Activated CD4-positive, alpha-beta T cell treated with anti-CD3 and anti-CD28 coated beads, Interleukin-2, amount 10 ng/mL, durations not matched to agents 24 days and 14 days (primary cell): ENCODE measurements at regions of chr1 and their contacts with region 1.

Region 1: GRCh38 chr1:229661022-229661877 is 35.2 kb downstream of the URB2 start:
- DNase-seq: peak; percentile 90
- H3K4me3 Mint-ChIP-seq: no peak overlapping the region
- H3K27ac Mint-ChIP-seq: no peak overlapping the region
- H3K4me1 Mint-ChIP-seq: peaks cover 11% of the 10 kb centered on the region
- H3K27me3 Mint-ChIP-seq: no peaks in the 10 kb centered on the region

Region 2: DNA sequence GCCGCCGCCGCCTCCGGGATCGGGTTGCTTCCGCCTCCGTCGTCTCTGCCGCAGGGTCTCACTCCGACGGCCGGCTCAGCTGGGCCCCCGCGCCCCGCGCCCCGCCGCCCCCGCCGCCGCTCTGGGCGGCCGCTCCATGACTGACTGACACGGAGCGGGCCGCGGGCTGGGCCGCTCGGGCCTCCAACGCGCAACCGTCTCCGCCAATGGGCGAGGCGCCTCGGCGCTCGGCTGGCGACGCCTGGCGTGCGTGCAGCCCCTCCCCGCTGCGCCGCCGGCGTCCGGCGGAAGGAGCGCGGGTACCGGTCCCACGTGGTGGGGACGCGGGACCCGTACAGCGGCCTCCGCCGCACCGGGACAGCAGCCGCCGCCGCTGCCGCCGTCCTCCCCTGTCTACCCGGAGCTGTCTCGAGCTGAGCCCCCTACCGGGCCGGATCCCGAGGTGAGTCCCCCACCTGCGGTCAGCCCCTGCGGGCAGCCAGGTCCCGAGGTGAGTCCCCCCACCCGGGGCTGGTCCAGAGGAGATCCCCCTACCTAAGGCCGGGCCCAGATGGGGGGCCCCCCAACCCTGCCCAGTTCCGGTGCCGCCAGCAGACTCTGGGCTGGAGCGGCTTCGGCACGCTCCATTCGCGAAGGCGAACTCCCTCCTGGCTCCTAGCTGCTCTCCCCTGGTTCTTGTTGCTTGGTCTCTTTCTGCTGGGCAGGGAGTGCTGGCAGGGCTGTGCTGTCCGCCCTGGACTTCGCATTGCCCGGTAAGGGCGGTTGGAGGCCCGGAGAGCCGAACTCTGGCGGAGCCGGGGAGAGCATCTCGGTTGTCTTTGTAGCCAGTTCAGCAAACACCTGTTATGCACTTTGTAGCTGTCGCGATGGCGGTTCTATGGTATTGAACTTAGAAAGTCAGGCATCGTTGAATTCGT is 35.1 kb before region 1 on chr1 and contains the starts of genes TAF5L and URB2:
- intact Hi-C with region 1: loop called (anchors 5 kb)
- DNase-seq: peak; percentile 97
- H3K4me3 Mint-ChIP-seq: peak within 1 kb of the TSS; percentile 99
- H3K27ac Mint-ChIP-seq: peak within 1 kb of the TSS; percentile 96
- H3K4me1 Mint-ChIP-seq: peaks cover 49% of the 10 kb centered on the region
- H3K27me3 Mint-ChIP-seq: no peaks in the 10 kb centered on the region
- total RNA-seq, gene TAF5L: 29.7 and 30.7 TPM in 2 replicates
- total RNA-seq, gene URB2: 35.8 and 37.1 TPM in 2 replicates

Region 3: GRCh38 chr1:229848752-229849677 is 187.8 kb after region 1 on chr1:
- intact Hi-C with region 1: loop called (anchors 10 kb)
- DNase-seq: no peak
- H3K4me3 Mint-ChIP-seq: no peak overlapping the region
- H3K27ac Mint-ChIP-seq: no peak overlapping the region
- H3K4me1 Mint-ChIP-seq: no peaks in the 10 kb centered on the region
- H3K27me3 Mint-ChIP-seq: peaks cover 10% of the 10 kb centered on the region

Region 4: GRCh38 chr1:230167419-230167852 is 506.2 kb after region 1 on chr1:
- intact Hi-C with region 1: loop called (anchors 1 kb)
- DNase-seq: peak; percentile 78
- H3K4me3 Mint-ChIP-seq: no peak overlapping the region
- H3K27ac Mint-ChIP-seq: peak overlapping the region; percentile 1
- H3K4me1 Mint-ChIP-seq: peaks cover 36% of the 10 kb centered on the region
- H3K27me3 Mint-ChIP-seq: no peaks in the 10 kb centered on the region

Region 5: GRCh38 chr1:230310381-230311163 is 649.3 kb after region 1 on chr1:
- intact Hi-C with region 1: loop called (anchors 1 kb)
- DNase-seq: peak; percentile 86
- H3K4me3 Mint-ChIP-seq: no peak overlapping the region
- H3K27ac Mint-ChIP-seq: no peak overlapping the region
- H3K4me1 Mint-ChIP-seq: peaks cover 10% of the 10 kb centered on the region
- H3K27me3 Mint-ChIP-seq: peaks cover 10% of the 10 kb centered on the region